ENCODE measurements at regions of chr6 and their contacts with region 1.

Region 1: GRCh38 chr6:111259089-111259831 is 172.0 kb downstream of the SLC16A10 start:
- DNase-seq: peak; percentile 99
- H3K4me3 Mint-ChIP-seq: peak overlapping the region; percentile 77
- H3K27ac Mint-ChIP-seq: peak overlapping the region; percentile 79
- H3K4me1 Mint-ChIP-seq: peaks cover 34% of the 10 kb centered on the region
- H3K27me3 Mint-ChIP-seq: no peaks in the 10 kb centered on the region

Region 2: DNA sequence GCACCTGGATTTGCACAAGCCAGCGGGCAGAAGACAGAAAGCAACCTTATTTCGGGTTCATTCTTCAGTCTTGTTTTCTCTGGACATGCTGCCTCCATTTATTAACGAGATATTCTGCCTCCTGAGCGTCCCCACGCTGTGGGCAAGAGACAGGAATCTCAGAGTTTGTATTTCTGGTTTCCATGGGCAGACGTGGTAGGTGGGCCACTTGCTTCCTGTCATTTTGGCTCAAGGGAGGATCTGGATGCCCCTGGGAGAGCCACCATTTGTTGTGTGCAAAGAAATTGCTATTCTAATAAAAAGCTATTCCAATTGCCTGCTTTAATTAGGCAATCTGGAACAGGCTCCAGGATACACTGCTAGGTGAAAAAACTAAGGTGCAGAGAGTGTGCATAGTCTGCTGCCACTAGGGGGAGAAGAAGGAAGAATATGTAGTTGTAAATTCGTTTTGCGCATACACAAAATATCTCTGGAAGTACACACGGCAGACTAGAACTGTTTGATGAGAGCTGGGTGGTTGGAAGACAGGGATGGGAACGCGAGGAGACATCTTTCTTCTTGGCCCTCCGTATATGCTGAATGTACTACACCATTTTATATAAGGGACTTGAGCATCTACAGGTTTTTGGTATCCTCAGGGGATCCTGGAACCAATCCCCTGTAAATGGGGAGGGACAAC is 202.0 kb before region 1 on chr6:
- CTCF ChIA-PET with region 1: interaction called, 10 read pairs
- intact Hi-C with region 1: loop called (anchors 1 kb)
- DNase-seq: no peak
- H3K4me3 Mint-ChIP-seq: no peak overlapping the region
- H3K27ac Mint-ChIP-seq: no peak overlapping the region
- H3K4me1 Mint-ChIP-seq: no peaks in the 10 kb centered on the region
- H3K27me3 Mint-ChIP-seq: no peaks in the 10 kb centered on the region

Region 3: DNA sequence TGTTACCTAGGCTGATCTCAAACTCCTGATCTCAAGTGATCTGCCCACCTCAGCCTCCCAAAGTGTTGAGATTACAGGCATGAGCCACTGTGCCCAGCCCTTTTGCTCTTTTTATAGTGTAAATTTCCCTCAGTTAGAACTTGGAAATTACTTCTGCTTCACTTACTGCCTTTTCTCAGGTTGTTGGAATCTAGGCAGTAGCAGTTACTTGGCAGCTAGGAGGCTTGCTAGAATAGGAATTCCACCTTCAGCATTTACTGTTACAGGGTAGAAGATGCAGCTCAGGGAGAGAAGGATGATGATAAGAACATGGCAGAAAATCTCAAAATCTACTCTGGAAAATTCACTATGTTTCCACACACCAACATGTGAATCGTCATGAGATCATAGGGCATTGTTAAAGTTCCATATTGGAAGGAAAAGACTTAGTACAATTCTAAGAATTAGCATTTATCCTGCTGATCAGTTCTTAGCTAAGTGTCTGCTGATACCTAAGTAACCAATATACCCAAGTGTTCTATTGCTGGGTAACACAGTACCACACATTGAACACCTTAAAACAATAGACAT is 10.2 kb after region 1 on chr6:
- CTCF ChIA-PET with region 1: no interaction called
- intact Hi-C with region 1: no loop called
- DNase-seq: no peak
- H3K4me3 Mint-ChIP-seq: no peak overlapping the region
- H3K27ac Mint-ChIP-seq: no peak overlapping the region
- H3K4me1 Mint-ChIP-seq: peaks cover 20% of the 10 kb centered on the region
- H3K27me3 Mint-ChIP-seq: no peaks in the 10 kb centered on the region

Region 4: GRCh38 chr6:111406200-111406721 is 147.0 kb after region 1 on chr6:
- CTCF ChIA-PET with region 1: interaction called, 3 read pairs
- intact Hi-C with region 1: loop called (anchors 1 kb)
- DNase-seq: no peak
- H3K4me3 Mint-ChIP-seq: no peak overlapping the region
- H3K27ac Mint-ChIP-seq: no peak overlapping the region
- H3K4me1 Mint-ChIP-seq: peaks cover 10% of the 10 kb centered on the region
- H3K27me3 Mint-ChIP-seq: no peaks in the 10 kb centered on the region

Region 5: DNA sequence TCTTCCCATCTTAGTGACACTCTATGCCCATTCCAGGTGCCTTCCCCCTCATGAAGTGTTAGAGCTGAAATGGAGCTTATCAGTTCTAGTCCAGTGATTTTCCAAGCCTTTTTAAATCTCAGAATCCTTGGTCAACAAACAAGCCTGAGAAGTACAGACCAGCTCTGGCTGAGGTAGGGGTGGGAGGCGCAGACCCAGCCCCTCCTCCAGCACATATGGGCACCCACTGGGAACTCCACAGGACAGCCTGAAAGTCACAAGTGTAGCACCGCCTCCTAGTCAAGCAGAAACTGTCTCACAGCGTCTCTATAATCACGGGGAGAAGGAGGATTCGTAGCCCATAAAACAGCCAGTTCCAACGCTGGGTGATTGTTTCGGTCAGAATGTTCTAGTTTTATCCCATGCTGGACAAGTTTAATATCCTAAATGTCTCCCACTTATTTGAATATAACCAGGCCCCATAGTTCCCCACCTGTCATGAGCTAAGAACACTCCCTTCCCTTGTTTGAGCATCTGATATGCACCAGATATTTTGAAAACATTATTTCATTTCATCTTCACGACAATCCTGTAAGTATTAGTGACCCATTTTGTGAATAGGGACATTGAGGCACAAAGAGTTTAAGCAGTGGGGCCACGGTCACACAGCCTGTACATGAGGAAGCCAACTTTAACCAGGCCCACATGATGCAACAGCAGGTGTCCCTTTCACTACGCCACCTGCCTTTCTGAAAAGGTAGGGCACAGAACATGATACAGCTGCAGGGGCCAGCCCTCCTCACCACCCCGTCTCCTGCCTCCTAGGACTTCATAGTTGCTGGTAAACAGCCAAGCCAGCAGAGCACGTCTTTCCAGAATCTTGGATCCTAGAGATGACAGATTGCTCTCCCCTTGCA is 306.3 kb after region 1 on chr6:
- CTCF ChIA-PET with region 1: interaction called, 11 read pairs
- intact Hi-C with region 1: loop called (anchors 1 kb)
- DNase-seq: peak; percentile 62
- H3K4me3 Mint-ChIP-seq: no peak overlapping the region
- H3K27ac Mint-ChIP-seq: peak overlapping the region; percentile 64
- H3K4me1 Mint-ChIP-seq: peaks cover 49% of the 10 kb centered on the region
- H3K27me3 Mint-ChIP-seq: no peaks in the 10 kb centered on the region

Region 6: GRCh38 chr6:111642463-111643158 is 383.4 kb after region 1 on chr6:
- CTCF ChIA-PET with region 1: interaction called, 21 read pairs
- intact Hi-C with region 1: loop called (anchors 1 kb)
- DNase-seq: peak; percentile 73
- H3K4me3 Mint-ChIP-seq: no peak overlapping the region
- H3K27ac Mint-ChIP-seq: no peak overlapping the region
- H3K4me1 Mint-ChIP-seq: no peaks in the 10 kb centered on the region
- H3K27me3 Mint-ChIP-seq: no peaks in the 10 kb centered on the region

Region 7: DNA sequence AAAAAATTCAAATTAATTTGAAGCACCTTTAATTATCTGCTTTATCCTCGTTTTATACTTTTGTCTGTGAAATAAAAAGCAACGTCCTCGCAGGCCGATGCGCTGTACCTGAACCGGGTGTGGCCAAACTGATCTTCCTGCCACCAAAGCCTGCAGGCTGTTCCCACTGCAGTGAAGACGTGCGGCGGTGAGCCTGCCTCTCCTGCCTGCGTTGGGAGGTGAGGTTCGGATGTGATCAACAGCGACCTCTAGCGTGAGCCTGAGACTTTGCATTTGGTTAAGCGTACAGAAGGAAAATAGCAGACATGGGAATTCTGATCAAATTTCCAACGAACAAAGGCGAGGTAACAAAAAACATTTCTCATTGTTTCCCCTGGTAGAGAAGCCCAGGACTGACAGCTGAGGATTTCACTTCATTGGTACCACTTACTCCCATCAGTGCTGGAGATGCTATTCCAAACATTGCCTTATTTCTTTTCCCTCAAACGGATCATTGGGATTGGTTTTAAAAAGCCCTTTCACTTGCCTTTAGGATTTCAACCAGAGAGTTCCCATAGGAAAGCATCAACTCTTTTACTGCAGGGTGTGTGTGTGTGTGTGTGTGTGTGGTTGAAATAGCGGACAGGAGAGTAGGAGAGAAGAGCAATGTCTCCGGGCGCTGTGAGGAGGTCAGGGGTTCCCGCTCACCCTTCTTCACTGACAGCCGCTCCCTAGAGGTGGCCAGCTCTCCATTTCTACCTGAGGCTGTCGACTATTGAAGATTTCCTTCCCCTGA is 738.0 kb after region 1 on chr6:
- CTCF ChIA-PET with region 1: interaction called, 3 read pairs
- intact Hi-C with region 1: loop called (anchors 1 kb)
- DNase-seq: peak; percentile 89
- H3K4me3 Mint-ChIP-seq: peak overlapping the region; percentile 53
- H3K27ac Mint-ChIP-seq: peak overlapping the region; percentile 65
- H3K4me1 Mint-ChIP-seq: peaks cover 47% of the 10 kb centered on the region
- H3K27me3 Mint-ChIP-seq: no peaks in the 10 kb centered on the region

Region 8: GRCh38 chr6:112163295-112164257 is 904.3 kb after region 1 on chr6:
- CTCF ChIA-PET with region 1: interaction called, 4 read pairs
- intact Hi-C with region 1: loop called (anchors 1 kb)
- DNase-seq: peak; percentile 91
- H3K4me3 Mint-ChIP-seq: peak overlapping the region; percentile 61
- H3K27ac Mint-ChIP-seq: peak overlapping the region; percentile 37
- H3K4me1 Mint-ChIP-seq: peaks cover 12% of the 10 kb centered on the region
- H3K27me3 Mint-ChIP-seq: peaks cover 6% of the 10 kb centered on the region